ENCODE measurements at regions of chr1 and their contacts with region 1.

Region 1: GRCh38 chr1:196951711-196952394 is 8.3 kb downstream of the CFHR2 start:
- DNase-seq: no peak
- H3K4me3 Mint-ChIP-seq: no peak overlapping the region
- H3K27ac Mint-ChIP-seq: no peak overlapping the region
- H3K4me1 Mint-ChIP-seq: no peaks in the 10 kb centered on the region
- H3K27me3 Mint-ChIP-seq: no peaks in the 10 kb centered on the region

Region 2: DNA sequence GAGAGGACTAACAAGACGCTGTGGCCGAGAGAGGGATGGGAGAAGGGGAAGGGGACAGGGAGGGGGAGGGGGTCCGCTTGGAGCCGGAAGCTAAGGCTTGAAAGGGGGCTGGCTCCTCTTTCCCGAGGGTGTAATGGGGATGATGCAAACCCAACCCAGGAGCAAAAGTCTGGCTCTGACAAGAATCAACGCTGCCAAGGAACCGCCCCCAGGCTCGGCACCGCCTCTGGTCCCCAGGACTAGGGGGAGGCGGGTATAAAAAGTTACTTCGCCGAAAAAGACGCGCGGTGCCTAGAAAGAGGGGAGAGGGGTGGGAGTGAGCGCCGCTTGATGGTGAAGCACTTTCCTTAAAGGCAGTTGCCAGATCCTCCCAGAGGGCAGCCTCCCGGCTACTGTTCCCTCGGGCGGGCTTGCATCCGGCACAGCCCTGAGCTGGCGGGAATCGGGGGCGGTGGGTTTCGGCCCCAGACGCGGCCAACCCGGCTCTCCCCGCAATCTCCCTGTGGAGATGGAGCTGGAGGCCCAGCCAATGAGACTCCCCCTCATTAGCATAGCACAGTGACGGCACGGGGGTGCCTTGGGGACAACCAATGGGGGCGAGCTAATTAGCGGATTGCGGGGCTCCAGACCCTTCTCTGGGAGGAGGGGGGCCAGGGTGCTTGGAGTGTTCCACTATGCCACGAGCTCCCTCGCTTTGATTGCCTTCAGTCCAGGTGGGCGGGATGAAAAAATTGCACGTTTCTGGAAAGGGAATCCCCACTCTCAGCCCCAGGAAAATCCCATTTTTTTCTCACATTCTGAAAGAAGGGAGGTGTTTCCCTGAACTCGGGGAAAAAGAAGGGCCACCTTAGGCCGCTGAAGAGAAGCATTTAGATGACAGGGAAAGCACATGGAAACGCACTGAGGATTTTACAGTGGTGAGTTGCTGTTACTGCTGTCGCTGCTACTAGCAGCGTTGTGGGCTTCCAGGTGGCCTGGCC is 343.2 kb before region 1 on chr1 and contains the start of gene KCNT2:
- intact Hi-C with region 1: no loop called
- DNase-seq: no peak
- H3K4me3 Mint-ChIP-seq: peak within 1 kb of the TSS; percentile 11
- H3K27ac Mint-ChIP-seq: no peak within 1 kb of the TSS
- H3K4me1 Mint-ChIP-seq: peaks cover 6% of the 10 kb centered on the region
- H3K27me3 Mint-ChIP-seq: peaks cover 46% of the 10 kb centered on the region
- total RNA-seq, gene KCNT2: not detected in 2 replicates

Region 3: GRCh38 chr1:196808529-196809235 is 143.2 kb before region 1 on chr1:
- intact Hi-C with region 1: loop called (anchors 10 kb)
- DNase-seq: no peak
- H3K4me3 Mint-ChIP-seq: no peak overlapping the region
- H3K27ac Mint-ChIP-seq: no peak overlapping the region
- H3K4me1 Mint-ChIP-seq: no peaks in the 10 kb centered on the region
- H3K27me3 Mint-ChIP-seq: no peaks in the 10 kb centered on the region

Measured in activated T-helper 1 cell treated with anti-CD3 and anti-CD28 coated beads, Interleukin-12 subunit alpha, Interleukin-12 subunit beta, Interleukin-2, Interleukin-4 antibody, amounts not matched to agents 30 ng/mL and 10 ng/mL and 1 ng/mL, durations not matched to agents 14 hours and 24 hours and 36 hours (primary cell).